ENCODE measurements at regions of chr1 and their contacts with region 1.

Region 1: GRCh38 chr1:242467556-242468145 is 56.8 kb downstream of the PLD5 start:
- DNase-seq: no peak
- H3K4me3 ChIP-seq: no peak overlapping the region
- H3K27ac ChIP-seq: no peak overlapping the region
- H3K4me1 ChIP-seq: no peaks in the 10 kb centered on the region
- H3K27me3 ChIP-seq: no peaks in the 10 kb centered on the region
- CTCF ChIP-seq: peak; percentile 26 to 53 (median 38)
- POLR2A ChIP-seq: no peak

Region 2: DNA sequence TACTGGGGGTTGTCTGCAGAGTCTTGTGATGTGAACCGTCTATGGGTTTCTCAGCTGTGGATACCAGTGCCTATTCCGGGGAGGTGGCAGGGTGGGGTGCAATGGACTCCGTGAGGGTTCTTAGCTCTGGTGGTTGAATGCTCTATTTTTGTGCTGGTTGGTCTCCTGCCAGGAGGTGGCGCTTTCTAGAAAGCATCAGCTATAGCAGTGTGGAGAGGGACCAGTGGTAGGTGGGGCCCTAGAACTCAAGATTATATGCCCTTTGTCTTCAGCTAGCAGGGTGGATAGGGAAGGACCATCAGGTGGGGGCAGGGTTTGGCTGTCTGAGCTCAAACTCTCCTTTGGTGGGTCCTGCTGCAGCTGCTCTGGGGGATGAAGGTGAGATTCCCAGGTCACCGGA is 184.2 kb after region 1 on chr1:
- intact Hi-C with region 1: no loop called
- DNase-seq: no peak
- H3K4me3 ChIP-seq: no peak overlapping the region
- H3K27ac ChIP-seq: no peak overlapping the region
- H3K4me1 ChIP-seq: no peaks in the 10 kb centered on the region
- H3K27me3 ChIP-seq: no peaks in the 10 kb centered on the region
- CTCF ChIP-seq: no peak
- POLR2A ChIP-seq: no peak

Region 3: DNA sequence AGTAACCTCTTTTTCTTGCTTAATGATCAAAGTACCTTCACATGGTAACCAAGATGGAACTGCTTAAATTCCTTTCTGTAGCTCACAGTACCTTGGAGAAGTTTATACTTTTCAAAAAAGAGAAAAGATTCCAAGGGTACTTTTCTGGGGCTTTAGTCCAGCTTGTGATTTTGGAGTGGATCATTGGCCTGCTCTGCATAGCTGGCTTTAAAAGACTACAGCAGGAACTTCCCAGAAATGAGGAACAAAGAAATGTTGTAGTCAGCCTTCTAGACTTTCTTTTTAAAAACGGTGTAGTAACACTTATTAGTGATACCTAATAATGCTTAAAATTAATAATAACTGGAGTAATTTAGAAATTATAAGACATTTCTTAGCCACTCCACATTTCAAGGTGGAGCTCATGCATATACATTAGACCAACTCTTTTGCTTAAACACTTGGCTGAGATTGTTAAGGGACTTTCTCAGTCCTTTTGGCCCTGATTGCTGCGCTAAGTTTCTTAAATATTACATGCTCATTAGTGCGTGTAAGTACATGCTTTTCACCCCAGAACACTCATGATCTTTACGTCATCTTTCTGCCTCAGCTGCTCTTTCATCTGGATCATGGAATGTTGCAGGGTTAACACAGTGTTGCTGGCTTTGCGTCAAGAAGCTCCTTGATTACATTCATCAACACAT is 845.4 kb after region 1 on chr1:
- intact Hi-C with region 1: no loop called
- DNase-seq: no peak
- H3K4me3 ChIP-seq: no peak overlapping the region
- H3K27ac ChIP-seq: peak overlapping the region in 3 of 4 donors; percentile 11 to 25 (median 16)
- H3K4me1 ChIP-seq: peaks cover 0 to 17% (median 0%) of the 10 kb centered on the region in 3 donors
- H3K27me3 ChIP-seq: no peaks in the 10 kb centered on the region
- CTCF ChIP-seq: no peak
- POLR2A ChIP-seq: no peak

Region 4: GRCh38 chr1:243325305-243325890 is 857.7 kb after region 1 on chr1:
- intact Hi-C with region 1: loop called (anchors 10 kb)
- DNase-seq: no peak
- H3K4me3 ChIP-seq: no peak overlapping the region
- H3K27ac ChIP-seq: no peak overlapping the region
- H3K4me1 ChIP-seq: no peaks in the 10 kb centered on the region
- H3K27me3 ChIP-seq: no peaks in the 10 kb centered on the region
- CTCF ChIP-seq: peak; percentile 61 to 83 (median 81)
- POLR2A ChIP-seq: no peak

Measured in esophagus squamous epithelium (tissue), 5 donors.